Mammary epithelial cell (primary cell): ENCODE measurements at regions of chr6 and their contacts with region 1.

Region 1: GRCh38 chr6:84967389-84967788 is 203.0 kb upstream of the TBX18 start:
- DNase-seq: peak; percentile 27
- H3K4me3 ChIP-seq: no peak overlapping the region
- H3K27ac ChIP-seq: no peak overlapping the region
- H3K4me1 ChIP-seq: no peaks in the 10 kb centered on the region
- H3K27me3 ChIP-seq: peaks cover 7% of the 10 kb centered on the region
- CTCF ChIP-seq: peak; percentile 61 to 76

Region 2: DNA sequence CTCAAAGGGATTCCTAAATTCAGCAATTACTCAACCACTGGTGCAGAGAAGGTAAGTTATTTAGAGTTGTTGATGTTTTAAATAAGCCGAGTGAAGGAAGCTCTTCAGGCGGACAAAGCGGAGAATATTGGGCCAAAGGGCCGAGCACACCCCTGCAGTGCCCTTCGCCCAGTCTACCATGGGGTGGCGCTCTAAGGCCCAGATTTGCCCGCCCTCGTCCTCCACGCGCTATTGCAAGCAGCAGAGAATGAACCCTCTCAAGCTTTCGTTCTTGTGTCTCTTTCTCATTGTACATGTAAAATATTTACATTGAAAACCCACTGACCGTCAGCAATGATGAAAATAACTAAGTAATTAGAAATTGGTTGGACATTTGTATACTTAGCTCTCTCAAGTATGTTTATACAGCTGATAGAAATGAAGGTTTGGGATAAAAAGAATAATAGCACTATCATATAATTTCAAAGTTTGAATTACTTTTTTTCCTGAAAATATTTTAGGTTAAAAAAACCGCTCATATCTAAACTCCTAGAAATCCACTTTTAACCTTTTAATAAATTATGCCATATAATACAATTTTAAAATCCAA is 544.9 kb before region 1 on chr6:
- CTCF ChIA-PET with region 1: no interaction called
- dilution Hi-C with region 1: no loop called
- in situ Hi-C with region 1: loop called (anchors 10 to 25 kb)
- intact Hi-C with region 1: loop called (anchors 1 kb)
- DNase-seq: peak; percentile 21
- H3K4me3 ChIP-seq: no peak overlapping the region
- H3K27ac ChIP-seq: no peak overlapping the region
- H3K4me1 ChIP-seq: no peaks in the 10 kb centered on the region
- H3K27me3 ChIP-seq: peaks cover 20% of the 10 kb centered on the region
- CTCF ChIP-seq: peak; percentile 88 to 96

Region 3: DNA sequence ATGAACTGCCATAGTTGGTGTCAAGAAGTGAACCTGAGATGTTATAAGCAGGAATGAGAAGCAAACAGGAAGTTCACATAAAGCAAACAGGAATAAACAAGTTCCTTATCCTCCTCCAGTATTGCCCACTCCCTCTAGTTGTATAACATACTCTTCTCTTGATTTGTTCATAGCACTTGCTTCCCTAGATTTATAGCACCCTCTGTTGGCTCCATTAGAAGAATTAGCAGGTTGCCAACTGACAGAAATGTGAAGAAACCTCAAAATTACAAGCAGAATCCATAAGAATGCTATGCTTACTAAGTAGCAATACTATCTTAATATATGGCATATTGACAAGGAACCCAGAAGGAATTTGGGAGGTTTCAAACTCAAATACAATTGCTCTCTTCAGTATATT is 398.4 kb before region 1 on chr6:
- CTCF ChIA-PET with region 1: no interaction called
- dilution Hi-C with region 1: no loop called
- in situ Hi-C with region 1: no loop called
- intact Hi-C with region 1: loop called (anchors 5 kb)
- DNase-seq: peak; percentile 14
- H3K4me3 ChIP-seq: no peak overlapping the region
- H3K27ac ChIP-seq: no peak overlapping the region
- H3K4me1 ChIP-seq: no peaks in the 10 kb centered on the region
- H3K27me3 ChIP-seq: no peaks in the 10 kb centered on the region
- CTCF ChIP-seq: peak in 1 of 2 donors; percentile 45

Region 4: GRCh38 chr6:84774157-84774984 is 193.0 kb before region 1 on chr6:
- CTCF ChIA-PET with region 1: interaction called, 6 read pairs
- dilution Hi-C with region 1: no loop called
- in situ Hi-C with region 1: no loop called
- intact Hi-C with region 1: loop called (anchors 1 kb)
- DNase-seq: peak; percentile 47
- H3K4me3 ChIP-seq: peak overlapping the region in 1 of 3 experiments; percentile 33
- H3K27ac ChIP-seq: no peak overlapping the region
- H3K4me1 ChIP-seq: peaks cover 13% of the 10 kb centered on the region
- H3K27me3 ChIP-seq: peaks cover 47% of the 10 kb centered on the region
- CTCF ChIP-seq: peak; percentile 37 to 62

Region 5: GRCh38 chr6:85015396-85015990 is 48.1 kb after region 1 on chr6:
- CTCF ChIA-PET with region 1: no interaction called
- dilution Hi-C with region 1: no loop called
- in situ Hi-C with region 1: no loop called
- intact Hi-C with region 1: no loop called
- DNase-seq: no peak
- H3K4me3 ChIP-seq: no peak overlapping the region
- H3K27ac ChIP-seq: no peak overlapping the region
- H3K4me1 ChIP-seq: no peaks in the 10 kb centered on the region
- H3K27me3 ChIP-seq: peaks cover 2% of the 10 kb centered on the region
- CTCF ChIP-seq: peak; percentile 68 to 80

Region 6: DNA sequence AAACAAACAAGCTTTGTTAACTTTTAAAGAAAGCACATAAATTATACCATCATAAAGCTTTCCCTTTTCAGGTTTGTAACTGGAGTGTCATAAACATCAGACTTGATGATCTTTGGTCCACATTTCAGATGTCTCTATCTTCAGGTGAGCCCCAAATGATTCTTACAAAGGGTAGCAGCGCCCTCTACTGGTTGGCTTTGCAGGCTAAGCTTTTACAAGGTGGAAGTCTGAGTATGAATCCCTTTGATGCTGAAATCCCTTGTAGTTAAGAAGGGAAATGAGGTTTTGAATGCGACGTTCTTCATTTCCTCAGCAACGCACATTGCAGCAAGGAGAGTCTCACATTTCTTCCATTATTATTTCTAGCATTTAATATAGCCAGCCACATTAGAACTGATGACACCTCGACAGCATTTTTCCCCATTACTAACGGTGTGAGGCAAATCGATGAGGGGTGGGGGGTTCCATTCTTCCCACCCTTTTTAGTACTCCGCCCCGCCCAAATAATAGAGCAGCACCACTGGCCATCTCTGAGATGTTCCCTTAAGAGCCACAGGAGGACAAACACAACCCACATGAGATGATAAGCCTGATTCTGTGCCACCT is 356.1 kb after region 1 on chr6:
- CTCF ChIA-PET with region 1: no interaction called
- dilution Hi-C with region 1: no loop called
- in situ Hi-C with region 1: no loop called
- intact Hi-C with region 1: loop called (anchors 1 kb)
- DNase-seq: peak; percentile 66
- H3K4me3 ChIP-seq: no peak overlapping the region
- H3K27ac ChIP-seq: no peak overlapping the region
- H3K4me1 ChIP-seq: no peaks in the 10 kb centered on the region
- H3K27me3 ChIP-seq: no peaks in the 10 kb centered on the region
- CTCF ChIP-seq: peak; percentile 90 to 91